MCF 10A (cell line): ENCODE measurements at regions of chr2 and their contacts with region 1.

Region 1: GRCh38 chr2:529425-529824 is 147.8 kb downstream of the TMEM18 start:
- DNase-seq: peak; percentile 50
- H3K4me3 Mint-ChIP-seq: no peak overlapping the region
- H3K27ac Mint-ChIP-seq: no peak overlapping the region
- H3K4me1 Mint-ChIP-seq: peaks cover 3% of the 10 kb centered on the region
- H3K27me3 Mint-ChIP-seq: no peaks in the 10 kb centered on the region
- CTCF ChIP-seq: peak; percentile 50

Region 2: GRCh38 chr2:84121-84520 is 445.3 kb before region 1 on chr2:
- CTCF ChIA-PET with region 1: no interaction called
- POLR2A ChIA-PET with region 1: no interaction called
- intact Hi-C with region 1: no loop called
- DNase-seq: no peak
- H3K4me3 Mint-ChIP-seq: no peak overlapping the region
- H3K27ac Mint-ChIP-seq: no peak overlapping the region
- H3K4me1 Mint-ChIP-seq: no peaks in the 10 kb centered on the region
- H3K27me3 Mint-ChIP-seq: no peaks in the 10 kb centered on the region
- CTCF ChIP-seq: no peak

Region 3: GRCh38 chr2:246489-247144 is 282.8 kb before region 1 on chr2:
- CTCF ChIA-PET with region 1: interaction called, 3 read pairs
- POLR2A ChIA-PET with region 1: no interaction called
- intact Hi-C with region 1: loop called (anchors 10 kb)
- DNase-seq: peak; percentile 70
- H3K4me3 Mint-ChIP-seq: no peak overlapping the region
- H3K27ac Mint-ChIP-seq: no peak overlapping the region
- H3K4me1 Mint-ChIP-seq: peaks cover 8% of the 10 kb centered on the region
- H3K27me3 Mint-ChIP-seq: no peaks in the 10 kb centered on the region
- CTCF ChIP-seq: peak; percentile 51

Region 4: GRCh38 chr2:516944-517343 is 12.5 kb before region 1 on chr2:
- CTCF ChIA-PET with region 1: no interaction called
- POLR2A ChIA-PET with region 1: no interaction called
- intact Hi-C with region 1: no loop called
- DNase-seq: no peak
- H3K4me3 Mint-ChIP-seq: no peak overlapping the region
- H3K27ac Mint-ChIP-seq: no peak overlapping the region
- H3K4me1 Mint-ChIP-seq: no peaks in the 10 kb centered on the region
- H3K27me3 Mint-ChIP-seq: no peaks in the 10 kb centered on the region
- CTCF ChIP-seq: no peak